ENCODE measurements at regions of chr3 and their contacts with region 1.

Region 1: DNA sequence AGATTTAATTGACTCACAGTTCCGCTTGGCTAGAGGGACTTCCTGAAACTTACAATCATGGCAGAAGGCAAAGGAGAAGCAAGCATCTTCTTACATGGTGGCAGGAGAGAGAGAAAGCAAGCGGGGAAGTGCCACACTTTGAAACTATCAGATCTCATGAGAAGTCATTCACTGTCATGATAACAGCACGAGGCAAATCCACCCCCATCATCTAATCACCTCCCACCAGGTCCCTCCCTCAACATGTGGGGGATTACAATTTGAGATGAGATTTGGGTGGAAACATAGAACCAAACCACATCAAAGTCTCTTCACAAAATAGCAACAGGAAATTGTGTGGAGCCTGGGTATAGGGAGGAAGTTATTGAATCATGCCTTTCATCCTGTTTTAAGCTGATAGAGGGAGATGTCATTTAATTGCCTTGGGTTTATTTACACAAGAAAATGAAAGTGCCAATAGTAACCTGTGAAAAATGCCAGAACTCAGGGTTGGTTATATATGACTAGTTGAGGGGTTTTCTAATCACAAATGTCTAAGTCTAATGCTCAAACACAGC is 624.8 kb upstream of the LMCD1 start:
- DNase-seq: peak; percentile 92
- H3K4me3 ChIP-seq: peak overlapping the region in 1 of 3 experiments; percentile 1
- H3K27ac ChIP-seq: peak overlapping the region; percentile 76
- H3K4me1 ChIP-seq: peaks cover 40% of the 10 kb centered on the region
- H3K27me3 ChIP-seq: no peaks in the 10 kb centered on the region
- CTCF ChIP-seq: no peak
- POLR2A ChIP-seq: peak; percentile 41

Region 2: GRCh38 chr3:6449099-6449498 is 1427.7 kb before region 1 on chr3:
- CTCF ChIA-PET with region 1: no interaction called
- POLR2A ChIA-PET with region 1: no interaction called
- dilution Hi-C with region 1: no loop called
- intact Hi-C with region 1: loop called (anchors 2 kb)
- DNase-seq: peak; percentile 87
- H3K4me3 ChIP-seq: no peak overlapping the region
- H3K27ac ChIP-seq: peak overlapping the region; percentile 76
- H3K4me1 ChIP-seq: peaks cover 40% of the 10 kb centered on the region
- H3K27me3 ChIP-seq: no peaks in the 10 kb centered on the region
- CTCF ChIP-seq: no peak
- POLR2A ChIP-seq: no peak

Region 3: DNA sequence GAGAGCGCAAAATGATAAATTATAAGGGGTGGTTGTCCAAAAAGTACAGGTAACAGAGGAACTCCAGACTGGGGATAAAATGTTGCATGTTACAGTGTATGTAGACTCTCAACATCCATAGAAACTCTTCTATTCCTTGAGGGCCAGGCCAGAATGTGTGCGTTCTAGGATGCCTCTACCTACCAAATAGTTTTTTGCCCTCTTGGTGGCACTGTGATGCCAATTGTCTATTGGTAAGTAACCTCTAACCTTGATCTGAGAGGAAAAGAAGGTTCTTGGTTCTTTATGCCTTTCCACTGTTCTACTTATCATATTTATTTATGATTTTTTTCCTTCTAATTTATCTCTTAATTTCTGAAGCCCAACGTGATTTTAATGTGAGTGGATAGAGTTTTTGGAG is 591.3 kb before region 1 on chr3:
- CTCF ChIA-PET with region 1: no interaction called
- POLR2A ChIA-PET with region 1: no interaction called
- dilution Hi-C with region 1: no loop called
- intact Hi-C with region 1: loop called (anchors 1 kb)
- DNase-seq: peak; percentile 49
- H3K4me3 ChIP-seq: no peak overlapping the region
- H3K27ac ChIP-seq: no peak overlapping the region
- H3K4me1 ChIP-seq: peaks cover 28% of the 10 kb centered on the region
- H3K27me3 ChIP-seq: no peaks in the 10 kb centered on the region
- CTCF ChIP-seq: peak in 1 of 2 donors; percentile 14
- POLR2A ChIP-seq: no peak

Region 4: GRCh38 chr3:7346364-7346763 is 530.5 kb before region 1 on chr3:
- CTCF ChIA-PET with region 1: no interaction called
- POLR2A ChIA-PET with region 1: no interaction called
- dilution Hi-C with region 1: no loop called
- intact Hi-C with region 1: loop called (anchors 1 kb)
- DNase-seq: peak; percentile 97
- H3K4me3 ChIP-seq: peak overlapping the region in 1 of 3 experiments; percentile 6
- H3K27ac ChIP-seq: peak overlapping the region; percentile 97
- H3K4me1 ChIP-seq: peaks cover 24% of the 10 kb centered on the region
- H3K27me3 ChIP-seq: no peaks in the 10 kb centered on the region
- CTCF ChIP-seq: no peak
- POLR2A ChIP-seq: peak; percentile 19

Region 5: DNA sequence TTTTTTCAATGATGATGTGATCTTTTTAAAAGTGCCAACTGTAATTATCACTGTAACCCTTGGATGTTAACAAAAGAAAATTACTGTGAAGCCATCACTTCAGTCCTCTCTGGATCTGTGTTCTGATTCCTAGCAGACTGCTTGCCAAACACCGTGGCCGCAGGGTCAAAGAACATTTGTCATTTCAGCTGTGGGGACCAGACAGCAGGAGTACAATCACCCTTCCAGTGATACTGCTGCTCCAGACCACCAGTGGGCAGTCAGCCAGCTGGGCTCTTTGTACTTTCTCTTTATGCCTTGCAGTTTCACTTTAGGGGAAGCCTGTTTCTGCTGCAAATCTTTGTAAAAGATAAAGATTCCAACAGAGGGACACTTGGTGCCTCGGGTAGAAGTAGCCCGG is 245.9 kb before region 1 on chr3:
- CTCF ChIA-PET with region 1: no interaction called
- POLR2A ChIA-PET with region 1: no interaction called
- dilution Hi-C with region 1: no loop called
- intact Hi-C with region 1: loop called (anchors 2 kb)
- DNase-seq: peak; percentile 75
- H3K4me3 ChIP-seq: no peak overlapping the region
- H3K27ac ChIP-seq: peak overlapping the region; percentile 23
- H3K4me1 ChIP-seq: peaks cover 13% of the 10 kb centered on the region
- H3K27me3 ChIP-seq: no peaks in the 10 kb centered on the region
- CTCF ChIP-seq: peak in 1 of 2 donors; percentile 36
- POLR2A ChIP-seq: no peak

Region 6: DNA sequence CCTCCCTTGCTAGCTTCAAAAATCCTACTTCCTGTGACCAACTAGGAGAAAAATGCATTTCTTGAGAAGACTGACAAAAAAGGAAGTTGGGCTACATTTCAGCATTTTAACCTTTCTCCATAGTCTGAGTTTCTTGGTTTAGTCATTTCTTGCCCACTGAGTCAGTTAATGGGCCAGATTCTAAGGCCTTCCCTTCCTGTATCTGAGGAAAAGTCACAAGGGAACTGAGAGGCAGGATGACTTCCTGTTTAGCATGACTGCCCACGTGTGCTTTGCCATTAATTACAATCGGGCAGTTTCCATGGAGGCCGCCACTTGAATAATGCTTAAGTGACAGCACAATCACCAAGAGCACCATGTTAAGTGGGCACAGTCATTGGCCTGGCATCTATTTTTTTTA is 169.6 kb before region 1 on chr3:
- CTCF ChIA-PET with region 1: no interaction called
- POLR2A ChIA-PET with region 1: no interaction called
- dilution Hi-C with region 1: no loop called
- intact Hi-C with region 1: loop called (anchors 1 kb)
- DNase-seq: peak; percentile 74
- H3K4me3 ChIP-seq: no peak overlapping the region
- H3K27ac ChIP-seq: peak overlapping the region; percentile 95
- H3K4me1 ChIP-seq: peaks cover 55% of the 10 kb centered on the region
- H3K27me3 ChIP-seq: no peaks in the 10 kb centered on the region
- CTCF ChIP-seq: no peak
- POLR2A ChIP-seq: peak; percentile 22

Region 7: DNA sequence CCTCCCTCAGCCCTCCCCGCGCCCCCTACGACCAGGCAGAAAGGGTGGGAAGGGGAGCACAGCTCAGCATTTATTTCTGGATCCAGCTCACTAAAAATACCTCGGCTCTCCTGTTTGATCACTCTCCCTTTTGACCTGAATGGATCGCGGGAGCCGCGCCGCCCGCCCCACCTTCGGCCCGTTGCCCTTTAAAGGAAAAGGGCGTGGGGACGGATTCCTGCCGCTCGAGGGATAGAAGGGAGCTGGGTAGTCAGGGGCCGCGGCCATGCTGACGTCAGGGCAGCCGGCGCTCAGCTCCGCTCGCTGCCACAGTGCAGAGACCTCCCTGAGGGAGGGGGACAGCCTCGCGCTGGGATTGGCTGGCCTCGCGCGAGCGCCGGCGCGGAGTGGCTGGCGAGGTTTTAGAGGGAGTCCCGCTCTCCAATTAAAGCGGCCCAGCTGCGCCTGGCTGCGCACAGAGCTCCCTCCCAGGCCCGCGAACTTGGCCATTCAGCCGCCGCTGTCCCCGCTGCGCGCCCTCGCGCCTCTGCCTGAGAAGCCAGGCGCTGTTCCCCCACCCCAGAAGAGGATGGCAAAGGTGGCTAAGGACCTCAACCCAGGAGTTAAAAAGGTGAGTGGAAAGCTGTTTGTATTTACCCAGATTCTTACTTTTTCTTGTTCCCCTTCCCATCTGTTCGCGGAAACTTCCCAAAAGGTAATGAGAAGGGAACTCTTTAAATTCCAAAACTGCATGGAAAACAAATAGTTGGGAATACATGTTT is 624.7 kb after region 1 on chr3 and contains the start of gene LMCD1:
- CTCF ChIA-PET with region 1: no interaction called
- POLR2A ChIA-PET with region 1: no interaction called
- dilution Hi-C with region 1: no loop called
- intact Hi-C with region 1: loop called (anchors 10 kb)
- DNase-seq: peak; percentile 98
- H3K4me3 ChIP-seq: peak within 1 kb of the TSS; percentile 43 to 72 (median 62)
- H3K27ac ChIP-seq: peak within 1 kb of the TSS; percentile 95
- H3K4me1 ChIP-seq: peaks cover 49% of the 10 kb centered on the region
- H3K27me3 ChIP-seq: no peaks in the 10 kb centered on the region
- CTCF ChIP-seq: no peak
- POLR2A ChIP-seq: peak; percentile 43
- total RNA-seq, gene LMCD1: 11.1 and 14.5 TPM in 2 replicates